ENCODE measurements at regions of chr1 and their contacts with region 1.

Region 1: GRCh38 chr1:90114521-90115141 is 119.7 kb downstream of the ZNF326 start:
- DNase-seq: no peak
- H3K4me3 ChIP-seq: no peak overlapping the region
- H3K27ac ChIP-seq: no peak overlapping the region
- H3K4me1 ChIP-seq: no peaks in the 10 kb centered on the region
- H3K27me3 ChIP-seq: no peaks in the 10 kb centered on the region
- CTCF ChIP-seq: peak in 2 of 3 experiments; percentile 69 to 78

Region 2: DNA sequence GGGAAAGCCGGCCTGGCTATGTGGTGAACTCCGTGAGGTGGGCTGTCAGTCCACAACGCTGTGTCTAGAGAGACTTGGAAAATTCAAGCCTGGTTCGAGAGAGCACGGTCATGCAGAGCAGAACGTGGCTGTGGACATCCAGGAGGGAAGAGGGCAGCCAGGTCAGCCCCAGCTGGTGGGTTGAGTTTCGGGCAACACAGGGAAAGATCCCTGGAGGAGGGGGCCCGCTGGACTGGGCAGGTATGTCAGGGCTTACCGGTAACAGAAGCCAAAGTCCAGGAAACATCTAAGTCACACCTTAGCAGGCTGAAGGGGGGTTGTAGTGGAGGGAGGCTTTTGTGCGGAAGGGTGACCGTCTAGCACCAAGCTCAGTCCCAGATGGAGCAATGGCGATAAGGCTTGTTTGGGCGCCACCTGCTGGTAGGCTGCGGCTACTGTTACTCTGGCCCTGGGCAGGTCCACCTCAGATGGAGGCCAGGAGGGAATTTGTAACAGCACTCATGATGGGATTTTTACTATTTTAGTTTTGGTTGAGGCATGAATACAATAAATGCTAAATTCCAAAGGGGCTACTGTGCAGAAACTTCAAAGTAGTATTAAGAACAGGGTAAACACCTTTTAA is 1050.5 kb after region 1 on chr1:
- intact Hi-C with region 1: loop called (anchors 1 kb)
- DNase-seq: peak in 1 of 2 donors; percentile 75
- H3K4me3 ChIP-seq: no peak overlapping the region
- H3K27ac ChIP-seq: no peak overlapping the region
- H3K4me1 ChIP-seq: no peaks in the 10 kb centered on the region
- H3K27me3 ChIP-seq: no peaks in the 10 kb centered on the region
- CTCF ChIP-seq: peak; percentile 70 to 86 (median 79)

Region 3: DNA sequence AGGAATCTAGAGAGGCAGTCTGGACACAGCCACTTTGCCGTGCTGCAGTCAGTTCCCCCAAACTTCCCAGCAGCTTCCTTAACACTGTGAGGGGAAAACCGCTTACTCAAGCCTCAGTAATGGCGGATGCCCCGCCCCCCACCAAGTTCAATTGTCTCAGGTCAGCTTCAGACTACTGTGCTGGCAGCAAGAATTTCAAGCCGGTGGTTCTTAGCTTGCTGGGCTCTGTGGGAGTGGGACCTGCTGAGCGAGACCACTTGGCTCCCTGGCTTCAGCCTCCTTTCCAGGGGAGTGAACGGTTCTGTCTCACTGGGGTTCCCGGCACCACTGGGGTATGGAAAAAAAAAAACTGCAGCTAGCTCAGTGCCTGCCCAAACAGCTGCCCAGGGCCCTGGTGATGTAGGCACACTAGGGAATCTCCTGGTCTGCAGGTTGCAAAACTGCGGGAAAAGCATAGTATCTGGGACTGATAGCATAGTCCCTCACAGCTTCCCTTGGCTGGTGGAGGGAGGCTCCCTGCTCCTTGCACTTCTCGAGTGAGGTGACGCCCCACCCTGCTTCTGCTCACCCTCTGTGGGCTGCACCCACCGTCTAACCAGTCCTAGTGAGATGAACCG is 1313.7 kb after region 1 on chr1:
- intact Hi-C with region 1: no loop called
- DNase-seq: no peak
- H3K4me3 ChIP-seq: no peak overlapping the region
- H3K27ac ChIP-seq: no peak overlapping the region
- H3K4me1 ChIP-seq: no peaks in the 10 kb centered on the region
- H3K27me3 ChIP-seq: no peaks in the 10 kb centered on the region
- CTCF ChIP-seq: no peak